ENCODE measurements at regions of chrX and their contacts with region 1.

Region 1: DNA sequence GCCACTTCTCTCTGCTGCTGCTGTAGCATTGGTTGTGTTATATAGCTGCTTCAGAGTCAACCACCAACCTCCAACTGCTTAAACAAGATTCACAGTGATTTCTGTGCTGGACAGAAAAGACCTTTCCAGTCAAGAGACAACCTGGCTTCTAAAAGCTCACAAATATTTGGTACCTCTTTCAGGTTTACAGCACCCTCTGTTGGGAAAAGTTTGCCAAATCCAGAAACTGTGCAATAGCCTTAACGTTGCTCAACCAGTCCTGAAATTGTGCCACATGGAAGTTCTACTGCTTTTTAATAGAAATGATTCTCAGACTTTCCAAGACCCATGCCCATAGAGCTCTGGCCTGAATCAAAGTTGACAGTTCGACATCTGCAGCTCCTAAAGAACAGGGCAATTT is 842.1 kb upstream of the HTR2C start:
- DNase-seq: no peak
- ATAC-seq: peak; percentile 54
- H3K4me3 ChIP-seq: no peak overlapping the region
- H3K27ac ChIP-seq: no peak overlapping the region
- H3K4me1 ChIP-seq: no peaks in the 10 kb centered on the region
- H3K27me3 ChIP-seq: no peaks in the 10 kb centered on the region
- CTCF ChIP-seq: no peak; a peak in 1 of 6 replicates
- EP300 ChIP-seq: no peak
- POLR2A ChIP-seq: no peak
- RAD21 ChIP-seq: peak; percentile 44; the same call in 1 of the 2 replicates

Region 2: GRCh38 chrX:113260474-113260873 is 481.3 kb before region 1 on chrX:
- CTCF ChIA-PET with region 1: no interaction called
- POLR2A ChIA-PET with region 1: no interaction called
- RAD21 ChIA-PET with region 1: no interaction called
- SMC1A ChIA-PET with region 1: no interaction called
- in situ Hi-C with region 1: no loop called
- intact Hi-C with region 1: loop called (anchors 10 kb)
- DNase-seq: no peak
- ATAC-seq: peak; percentile 66
- H3K4me3 ChIP-seq: no peak overlapping the region
- H3K27ac ChIP-seq: no peak overlapping the region
- H3K4me1 ChIP-seq: no peaks in the 10 kb centered on the region
- H3K27me3 ChIP-seq: no peaks in the 10 kb centered on the region
- CTCF ChIP-seq: peak in 2 of 3 experiments; percentile 33 to 34; a peak in 3 of 6 replicates
- EP300 ChIP-seq: no peak
- POLR2A ChIP-seq: no peak
- RAD21 ChIP-seq: no peak

Region 3: DNA sequence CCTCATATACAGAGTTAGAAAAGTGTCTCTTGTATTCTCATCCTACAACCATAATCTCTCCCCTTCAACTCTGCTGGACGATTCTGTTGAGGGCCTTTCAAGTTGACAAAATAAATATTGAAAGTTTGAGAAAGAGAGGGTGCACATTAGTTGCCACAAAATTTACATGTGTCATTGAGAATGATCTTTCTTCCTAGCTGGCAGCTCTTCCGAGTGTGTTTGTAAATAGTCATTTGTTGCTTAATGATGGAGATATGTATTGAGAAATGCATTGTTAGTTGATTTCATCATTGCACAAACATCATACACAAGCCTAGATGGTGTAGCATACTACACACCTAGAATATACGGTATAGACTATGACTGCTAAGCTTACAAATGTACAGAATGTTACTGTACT is 268.3 kb before region 1 on chrX:
- CTCF ChIA-PET with region 1: no interaction called
- POLR2A ChIA-PET with region 1: no interaction called
- RAD21 ChIA-PET with region 1: no interaction called
- SMC1A ChIA-PET with region 1: no interaction called
- in situ Hi-C with region 1: no loop called
- intact Hi-C with region 1: loop called (anchors 10 kb)
- DNase-seq: no peak
- ATAC-seq: peak; percentile 82
- H3K4me3 ChIP-seq: no peak overlapping the region
- H3K27ac ChIP-seq: no peak overlapping the region
- H3K4me1 ChIP-seq: no peaks in the 10 kb centered on the region
- H3K27me3 ChIP-seq: no peaks in the 10 kb centered on the region
- CTCF ChIP-seq: no peak
- EP300 ChIP-seq: no peak
- POLR2A ChIP-seq: no peak
- RAD21 ChIP-seq: no peak

Region 4: GRCh38 chrX:113522814-113523213 is 218.9 kb before region 1 on chrX:
- CTCF ChIA-PET with region 1: no interaction called
- POLR2A ChIA-PET with region 1: no interaction called
- RAD21 ChIA-PET with region 1: no interaction called
- SMC1A ChIA-PET with region 1: interaction called, 3 read pairs
- in situ Hi-C with region 1: no loop called
- intact Hi-C with region 1: loop called (anchors 5 kb)
- DNase-seq: peak; percentile 38
- ATAC-seq: peak; percentile 100
- H3K4me3 ChIP-seq: no peak overlapping the region
- H3K27ac ChIP-seq: 0 out of 2 replicates have a peak overlapping the region, but pooled peaks have one; percentile 9
- H3K4me1 ChIP-seq: no peaks in the 10 kb centered on the region
- H3K27me3 ChIP-seq: no peaks in the 10 kb centered on the region
- CTCF ChIP-seq: no peak
- EP300 ChIP-seq: peak in 1 of 2 experiments; percentile 79; a peak in 2 of 4 replicates
- POLR2A ChIP-seq: no peak
- RAD21 ChIP-seq: no peak

Region 5: GRCh38 chrX:113892401-113892800 is 150.7 kb after region 1 on chrX:
- CTCF ChIA-PET with region 1: no interaction called
- POLR2A ChIA-PET with region 1: no interaction called
- RAD21 ChIA-PET with region 1: no interaction called
- SMC1A ChIA-PET with region 1: no interaction called
- in situ Hi-C with region 1: no loop called
- intact Hi-C with region 1: no loop called
- DNase-seq: no peak
- ATAC-seq: no peak
- H3K4me3 ChIP-seq: no peak overlapping the region
- H3K27ac ChIP-seq: no peak overlapping the region
- H3K4me1 ChIP-seq: no peaks in the 10 kb centered on the region
- H3K27me3 ChIP-seq: no peaks in the 10 kb centered on the region
- CTCF ChIP-seq: no peak
- EP300 ChIP-seq: no peak
- POLR2A ChIP-seq: no peak
- RAD21 ChIP-seq: no peak

Measured in GM12878 (cell line).